HepG2 (cell line): ENCODE measurements at regions of chr3 and their contacts with region 1.

Region 1: GRCh38 chr3:66344848-66345578 is 124.2 kb downstream of the SLC25A26 start:
- DNase-seq: no peak
- ATAC-seq: peak; percentile 32; the same call in 2 of the 3 replicates
- H3K4me3 ChIP-seq: no peak overlapping the region
- H3K27ac ChIP-seq: no peak overlapping the region
- H3K4me1 ChIP-seq: peaks cover 18% of the 10 kb centered on the region
- H3K27me3 ChIP-seq: no peaks in the 10 kb centered on the region
- CTCF ChIP-seq: no peak
- EP300 ChIP-seq: no peak
- POLR2A ChIP-seq: no peak
- RAD21 ChIP-seq: no peak

Region 2: GRCh38 chr3:66297900-66298299 is 47.1 kb before region 1 on chr3:
- CTCF ChIA-PET with region 1: no interaction called
- POLR2A ChIA-PET with region 1: no interaction called
- in situ Hi-C with region 1: no loop called
- intact Hi-C with region 1: loop called (anchors 5 kb)
- DNase-seq: no peak
- ATAC-seq: no peak
- H3K4me3 ChIP-seq: no peak overlapping the region
- H3K27ac ChIP-seq: no peak overlapping the region
- H3K4me1 ChIP-seq: peaks cover 20% of the 10 kb centered on the region
- H3K27me3 ChIP-seq: no peaks in the 10 kb centered on the region; a peak in 1 of 5 replicates
- CTCF ChIP-seq: no peak
- EP300 ChIP-seq: no peak
- POLR2A ChIP-seq: no peak
- RAD21 ChIP-seq: no peak

Region 3: GRCh38 chr3:66554178-66554577 is 209.2 kb after region 1 on chr3:
- CTCF ChIA-PET with region 1: no interaction called
- POLR2A ChIA-PET with region 1: no interaction called
- in situ Hi-C with region 1: no loop called
- intact Hi-C with region 1: no loop called
- DNase-seq: no peak
- ATAC-seq: no peak
- H3K4me3 ChIP-seq: no peak overlapping the region
- H3K27ac ChIP-seq: no peak overlapping the region
- H3K4me1 ChIP-seq: no peaks in the 10 kb centered on the region
- H3K27me3 ChIP-seq: no peaks in the 10 kb centered on the region
- CTCF ChIP-seq: no peak
- EP300 ChIP-seq: no peak
- POLR2A ChIP-seq: no peak
- RAD21 ChIP-seq: no peak